Mucosa of descending colon (tissue), 3 donors: ENCODE measurements at regions of chr4 and their contacts with region 1.

Region 1: GRCh38 chr4:75724066-75724866 is at the start of gene USO1:
- DNase-seq: peak; percentile 98 to 100 (median 99)
- ATAC-seq: peak; percentile 97
- H3K4me3 ChIP-seq: peak within 1 kb of the TSS; percentile 83
- H3K4me1 ChIP-seq: peaks cover 28% of the 10 kb centered on the region
- CTCF ChIP-seq: peak; percentile 59
- total RNA-seq, gene USO1: 44.3 to 65.8 (median 55.9) TPM

Region 2: GRCh38 chr4:75673027-75673958 is 51.0 kb before region 1 on chr4 and contains the start of gene G3BP2:
- intact Hi-C with region 1: loop called in 1 of 2 experiments (anchors 5 kb)
- DNase-seq: peak; percentile 98 to 100 (median 98)
- ATAC-seq: peak; percentile 96
- H3K4me3 ChIP-seq: peak within 1 kb of the TSS; percentile 94
- H3K4me1 ChIP-seq: peaks cover 24% of the 10 kb centered on the region
- CTCF ChIP-seq: no peak
- total RNA-seq, gene G3BP2: 144 to 149 (median 149) TPM

Region 3: GRCh38 chr4:75745161-75745560 is 20.9 kb after region 1 on chr4:
- intact Hi-C with region 1: no loop called
- DNase-seq: no peak
- ATAC-seq: peak; percentile 80
- H3K4me3 ChIP-seq: no peak overlapping the region
- H3K4me1 ChIP-seq: peaks cover 5% of the 10 kb centered on the region
- CTCF ChIP-seq: no peak

Region 4: GRCh38 chr4:76016393-76016792 is 292.1 kb after region 1 on chr4:
- intact Hi-C with region 1: no loop called
- DNase-seq: no peak
- ATAC-seq: peak; percentile 70
- H3K4me3 ChIP-seq: no peak overlapping the region
- H3K4me1 ChIP-seq: no peaks in the 10 kb centered on the region
- CTCF ChIP-seq: no peak